ENCODE measurements at regions of chr4 and their contacts with region 1.

Region 1: GRCh38 chr4:122602277-122603142 is 18.4 kb downstream of the IL21 start:
- DNase-seq: peak; percentile 8
- H3K4me3 ChIP-seq: no peak overlapping the region
- H3K27ac ChIP-seq: no peak overlapping the region
- H3K4me1 ChIP-seq: no peaks in the 10 kb centered on the region
- H3K27me3 ChIP-seq: no peaks in the 10 kb centered on the region
- CTCF ChIP-seq: peak in 3 of 4 experiments; percentile 25 to 47 (median 41)
- POLR2A ChIP-seq: no peak

Region 2: GRCh38 chr4:121863799-121864198 is 738.7 kb before region 1 on chr4:
- intact Hi-C with region 1: no loop called
- DNase-seq: no peak
- H3K4me3 ChIP-seq: no peak overlapping the region
- H3K27ac ChIP-seq: no peak overlapping the region
- H3K4me1 ChIP-seq: no peaks in the 10 kb centered on the region
- H3K27me3 ChIP-seq: no peaks in the 10 kb centered on the region
- CTCF ChIP-seq: no peak
- POLR2A ChIP-seq: no peak

Region 3: DNA sequence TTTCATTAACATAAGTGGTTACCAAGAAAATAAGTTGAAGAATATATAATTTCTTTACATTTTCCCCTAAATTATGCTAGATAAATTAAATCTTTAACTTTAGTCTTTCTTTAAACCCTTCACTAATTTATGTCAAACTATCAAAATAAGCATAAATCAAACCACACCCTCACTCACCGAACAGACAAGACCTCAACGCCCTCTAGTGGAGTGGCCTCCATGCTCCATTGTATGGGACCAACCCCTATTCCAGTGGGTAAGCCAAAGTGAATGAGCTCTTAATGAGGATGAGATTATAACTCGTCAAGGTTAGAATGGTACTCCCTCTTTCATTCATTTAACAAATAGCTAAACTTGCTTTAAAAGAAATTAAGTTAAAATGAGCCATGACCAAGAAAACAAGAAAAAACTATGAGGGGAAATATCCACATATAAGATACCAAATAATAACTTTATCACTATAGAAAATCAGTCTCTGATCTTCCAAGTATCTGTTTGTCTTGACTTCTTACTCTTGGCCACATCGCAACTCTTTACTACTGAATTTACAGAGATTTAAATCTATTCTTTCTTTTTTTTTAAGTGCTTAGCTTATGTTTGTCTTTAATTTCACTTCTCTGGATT is 114.4 kb after region 1 on chr4:
- intact Hi-C with region 1: loop called (anchors 5 kb)
- DNase-seq: peak; percentile 52
- H3K4me3 ChIP-seq: no peak overlapping the region
- H3K27ac ChIP-seq: no peak overlapping the region
- H3K4me1 ChIP-seq: no peaks in the 10 kb centered on the region
- H3K27me3 ChIP-seq: no peaks in the 10 kb centered on the region
- CTCF ChIP-seq: peak; percentile 16 to 60 (median 57)
- POLR2A ChIP-seq: no peak

Region 4: DNA sequence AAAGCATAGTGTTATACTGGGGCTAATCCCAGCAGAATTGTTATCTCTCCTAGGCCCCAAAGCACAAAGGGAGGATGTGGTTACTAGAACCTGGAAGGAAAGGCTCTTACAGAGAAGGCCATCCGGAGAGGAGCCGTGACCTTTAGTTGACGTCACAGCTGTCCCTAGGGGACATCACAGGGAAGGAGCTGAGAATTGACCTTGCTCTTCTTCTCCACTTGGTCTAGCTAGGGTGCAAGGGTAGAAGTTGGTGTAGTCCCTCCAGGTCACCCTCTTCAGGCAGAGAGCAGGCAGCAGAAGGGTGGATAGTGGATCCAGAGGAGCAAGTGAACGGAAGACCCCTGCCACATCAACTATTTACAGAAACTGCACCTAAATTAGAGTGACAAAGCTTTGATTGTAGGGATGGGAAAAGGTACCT is 201.3 kb after region 1 on chr4:
- intact Hi-C with region 1: no loop called
- DNase-seq: no peak
- H3K4me3 ChIP-seq: no peak overlapping the region
- H3K27ac ChIP-seq: no peak overlapping the region
- H3K4me1 ChIP-seq: no peaks in the 10 kb centered on the region
- H3K27me3 ChIP-seq: no peaks in the 10 kb centered on the region
- CTCF ChIP-seq: no peak
- POLR2A ChIP-seq: no peak

Region 5: DNA sequence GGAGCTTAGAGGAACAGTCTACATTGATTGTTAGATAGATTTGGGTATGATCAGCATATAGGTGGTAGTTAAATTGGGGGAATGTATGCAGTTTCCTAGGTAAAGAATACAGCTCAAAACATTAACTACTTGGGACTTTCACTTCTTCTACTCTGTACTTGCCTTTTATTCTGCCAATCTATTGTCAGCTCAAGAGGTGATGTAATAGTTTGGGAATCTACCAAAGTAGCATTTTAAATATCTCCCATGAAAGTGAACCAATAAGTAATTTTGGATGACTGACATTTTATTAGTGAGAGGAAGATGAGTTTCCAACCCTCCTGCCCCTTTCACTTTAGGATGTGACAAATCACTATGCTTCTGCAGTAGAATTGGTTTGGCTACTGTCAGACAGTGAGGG is 276.5 kb after region 1 on chr4:
- intact Hi-C with region 1: no loop called
- DNase-seq: no peak
- H3K4me3 ChIP-seq: no peak overlapping the region
- H3K27ac ChIP-seq: no peak overlapping the region
- H3K4me1 ChIP-seq: no peaks in the 10 kb centered on the region
- H3K27me3 ChIP-seq: no peaks in the 10 kb centered on the region
- CTCF ChIP-seq: no peak
- POLR2A ChIP-seq: no peak

Region 6: GRCh38 chr4:122928930-122929329 is 326.4 kb after region 1 on chr4:
- intact Hi-C with region 1: loop called (anchors 5 kb)
- DNase-seq: no peak
- H3K4me3 ChIP-seq: no peak overlapping the region
- H3K27ac ChIP-seq: no peak overlapping the region
- H3K4me1 ChIP-seq: no peaks in the 10 kb centered on the region
- H3K27me3 ChIP-seq: no peaks in the 10 kb centered on the region
- CTCF ChIP-seq: no peak
- POLR2A ChIP-seq: no peak

Measured in prostate gland (tissue), 2 donors.